ENCODE measurements at regions of chr9 and their contacts with region 1.

Region 1: GRCh38 chr9:37036776-37037502 is 2.9 kb upstream of the PAX5 start:
- DNase-seq: peak; percentile 30
- H3K4me3 Mint-ChIP-seq: peak overlapping the region; percentile 72
- H3K27ac Mint-ChIP-seq: peak overlapping the region; percentile 46
- H3K4me1 Mint-ChIP-seq: peaks cover 25% of the 10 kb centered on the region
- H3K27me3 Mint-ChIP-seq: peaks cover 82% of the 10 kb centered on the region

Region 2: DNA sequence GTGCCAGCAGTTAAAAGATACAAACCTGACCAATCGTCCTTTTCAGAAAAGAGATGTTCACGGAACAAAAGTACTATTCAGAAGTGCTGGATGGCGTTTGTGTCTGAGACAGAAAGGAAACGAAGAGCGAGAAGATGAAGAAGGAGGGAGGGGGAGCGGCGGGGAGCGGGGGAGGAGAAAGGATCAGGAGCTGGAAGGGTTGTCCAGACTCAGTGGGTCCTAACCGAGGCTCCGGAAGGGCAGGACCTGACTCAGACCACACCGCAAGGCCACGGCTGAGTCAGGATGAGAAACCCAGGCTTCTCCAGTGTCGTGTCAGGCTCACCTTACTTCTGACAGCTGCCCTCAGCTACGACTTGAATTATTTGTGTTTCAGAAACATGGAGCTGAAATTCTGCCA is 49.0 kb before region 1 on chr9:
- intact Hi-C with region 1: loop called (anchors 2 kb)
- DNase-seq: no peak
- H3K4me3 Mint-ChIP-seq: no peak overlapping the region
- H3K27ac Mint-ChIP-seq: no peak overlapping the region
- H3K4me1 Mint-ChIP-seq: no peaks in the 10 kb centered on the region
- H3K27me3 Mint-ChIP-seq: peaks cover 62% of the 10 kb centered on the region

Region 3: DNA sequence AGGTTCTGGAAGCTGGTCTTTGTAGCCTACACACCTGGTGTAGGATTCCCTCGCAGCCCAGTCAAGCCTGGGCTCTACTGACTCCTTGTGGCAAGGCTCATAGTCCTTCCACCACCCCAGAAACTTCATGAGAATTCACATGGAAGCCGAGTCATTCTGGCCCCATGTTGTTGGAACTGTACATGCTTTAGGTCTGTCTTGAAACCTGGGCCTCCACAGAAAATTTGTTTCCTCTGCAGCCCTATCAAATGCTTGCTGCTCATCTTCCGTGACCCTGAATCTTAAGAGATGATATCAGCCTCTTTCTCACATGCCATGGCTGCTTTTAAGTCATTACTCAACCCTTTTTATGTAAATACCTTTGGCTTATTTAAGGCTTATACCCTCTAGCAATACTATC is 272.2 kb after region 1 on chr9:
- intact Hi-C with region 1: loop called (anchors 5 kb)
- DNase-seq: no peak
- H3K4me3 Mint-ChIP-seq: no peak overlapping the region
- H3K27ac Mint-ChIP-seq: no peak overlapping the region
- H3K4me1 Mint-ChIP-seq: peaks cover 5% of the 10 kb centered on the region
- H3K27me3 Mint-ChIP-seq: no peaks in the 10 kb centered on the region

Region 4: GRCh38 chr9:37329576-37329975 is 292.6 kb after region 1 on chr9:
- intact Hi-C with region 1: loop called (anchors 1 kb)
- DNase-seq: no peak
- H3K4me3 Mint-ChIP-seq: no peak overlapping the region
- H3K27ac Mint-ChIP-seq: no peak overlapping the region
- H3K4me1 Mint-ChIP-seq: peaks cover 4% of the 10 kb centered on the region
- H3K27me3 Mint-ChIP-seq: no peaks in the 10 kb centered on the region

Region 5: GRCh38 chr9:37350486-37351190 is 313.7 kb after region 1 on chr9:
- intact Hi-C with region 1: no loop called
- DNase-seq: no peak
- H3K4me3 Mint-ChIP-seq: no peak overlapping the region
- H3K27ac Mint-ChIP-seq: no peak overlapping the region
- H3K4me1 Mint-ChIP-seq: peaks cover 6% of the 10 kb centered on the region
- H3K27me3 Mint-ChIP-seq: no peaks in the 10 kb centered on the region

Measured in activated T-helper 1 cell treated with anti-CD3 and anti-CD28 coated beads, Interleukin-12 subunit alpha, Interleukin-12 subunit beta, Interleukin-2, Interleukin-4 antibody, amounts not matched to agents 30 ng/mL and 10 ng/mL and 1 ng/mL, durations not matched to agents 14 hours and 24 hours and 36 hours (primary cell).